Activated naive CD4-positive, alpha-beta T cell treated with anti-CD3 and anti-CD28 coated beads, Interleukin-2, amount 10 ng/mL, durations not matched to agents 7 days and 5 days (primary cell): ENCODE measurements at regions of chr12 and their contacts with region 1.

Region 1: GRCh38 chr12:14239350-14239934 is 126.0 kb upstream of the ATF7IP start:
- DNase-seq: peak; percentile 37
- H3K4me3 Mint-ChIP-seq: peak overlapping the region; percentile 53
- H3K27ac Mint-ChIP-seq: peak overlapping the region; percentile 67
- H3K4me1 Mint-ChIP-seq: peaks cover 22% of the 10 kb centered on the region
- H3K27me3 Mint-ChIP-seq: no peaks in the 10 kb centered on the region

Region 2: DNA sequence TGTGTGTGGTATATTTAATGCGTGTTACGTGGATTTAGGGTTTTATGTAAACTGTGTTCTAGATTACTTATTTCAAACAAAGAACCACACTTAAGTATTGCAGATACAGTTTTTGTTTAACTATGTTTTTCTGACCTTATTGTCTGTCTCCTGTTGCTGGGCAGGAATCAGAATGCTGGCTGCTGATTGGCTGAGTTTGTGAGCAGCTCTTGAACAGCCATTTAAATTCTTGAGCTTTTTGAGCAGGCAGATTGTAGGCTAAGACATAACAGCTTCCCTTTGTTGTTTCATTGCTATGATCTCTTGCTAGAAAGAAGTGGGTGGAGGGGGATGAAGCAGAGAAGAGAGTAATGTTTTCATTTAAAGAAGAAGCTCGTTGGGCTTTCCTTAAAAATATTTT is 178.3 kb after region 1 on chr12:
- CTCF ChIA-PET with region 1: interaction called, 18 read pairs
- DNase-seq: peak; percentile 84
- H3K4me3 Mint-ChIP-seq: peak overlapping the region; percentile 67
- H3K27ac Mint-ChIP-seq: peak overlapping the region; percentile 92
- H3K4me1 Mint-ChIP-seq: peaks cover 55% of the 10 kb centered on the region
- H3K27me3 Mint-ChIP-seq: no peaks in the 10 kb centered on the region

Region 3: GRCh38 chr12:14618983-14619382 is 379.5 kb after region 1 on chr12:
- CTCF ChIA-PET with region 1: interaction called, 26 read pairs
- DNase-seq: no peak
- H3K4me3 Mint-ChIP-seq: no peak overlapping the region
- H3K27ac Mint-ChIP-seq: no peak overlapping the region
- H3K4me1 Mint-ChIP-seq: no peaks in the 10 kb centered on the region
- H3K27me3 Mint-ChIP-seq: peaks cover 5% of the 10 kb centered on the region

Region 4: DNA sequence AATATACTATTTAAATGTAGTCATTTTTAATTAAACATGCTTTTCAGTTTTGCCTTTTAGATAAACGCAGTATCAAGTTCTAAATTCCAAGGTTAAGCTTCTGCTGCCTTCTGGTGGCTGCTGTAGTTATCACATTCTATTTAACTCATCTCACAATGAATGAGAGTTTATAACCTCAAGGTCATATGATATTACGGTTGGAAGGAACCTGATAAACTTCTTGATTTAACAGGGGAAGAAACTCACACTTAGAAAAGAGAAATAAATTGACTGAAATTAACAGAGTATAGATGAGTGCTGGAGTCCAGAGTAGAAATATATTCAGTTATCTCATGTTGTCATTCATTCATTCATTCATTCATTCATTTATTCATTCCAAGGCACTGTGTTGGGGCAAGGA is 425.1 kb after region 1 on chr12:
- CTCF ChIA-PET with region 1: interaction called, 11 read pairs
- DNase-seq: peak; percentile 47
- H3K4me3 Mint-ChIP-seq: no peak overlapping the region
- H3K27ac Mint-ChIP-seq: no peak overlapping the region
- H3K4me1 Mint-ChIP-seq: peaks cover 12% of the 10 kb centered on the region
- H3K27me3 Mint-ChIP-seq: no peaks in the 10 kb centered on the region